ENCODE measurements at regions of chr17 and their contacts with region 1.

Region 1: DNA sequence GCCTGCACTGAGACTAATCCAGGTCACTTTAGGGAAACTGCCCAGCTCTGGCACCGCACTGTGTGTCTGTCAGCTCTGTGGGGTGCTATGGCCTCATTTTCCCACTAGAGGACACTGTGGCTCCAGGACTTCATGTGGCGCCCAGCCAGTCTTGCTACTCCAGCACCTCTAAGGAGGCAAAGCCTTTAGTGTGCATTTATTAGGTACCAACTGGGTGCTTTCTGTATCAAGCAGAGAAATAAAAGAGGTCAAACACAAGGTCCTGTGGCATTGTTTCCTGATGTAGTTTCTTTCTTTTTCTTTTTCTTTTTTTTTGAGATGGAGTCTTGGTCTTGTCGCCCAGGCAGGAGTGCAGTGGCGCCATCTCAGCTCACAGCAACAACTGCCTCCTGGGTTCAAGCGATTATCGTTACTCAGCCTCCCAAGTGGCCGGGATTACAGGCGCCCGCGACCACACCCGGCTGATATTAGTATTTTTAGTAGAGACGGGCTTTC is 12.5 kb upstream of the RHBDL3 start:
- DNase-seq: peak; percentile 83
- H3K4me3 ChIP-seq: no peak overlapping the region
- H3K27ac ChIP-seq: no peak overlapping the region
- H3K4me1 ChIP-seq: peaks cover 0 to 5% (median 0%) of the 10 kb centered on the region in 6 donors
- H3K27me3 ChIP-seq: no peaks in the 10 kb centered on the region
- CTCF ChIP-seq: peak; percentile 73 to 90 (median 88)
- POLR2A ChIP-seq: no peak

Region 2: GRCh38 chr17:32319548-32319905 is 66.4 kb after region 1 on chr17:
- intact Hi-C with region 1: loop called (anchors 10 kb)
- DNase-seq: peak; percentile 91
- H3K4me3 ChIP-seq: peak overlapping the region in 7 of 8 donors; percentile 11 to 62 (median 30)
- H3K27ac ChIP-seq: no peak overlapping the region
- H3K4me1 ChIP-seq: peaks cover 0 to 31% (median 20%) of the 10 kb centered on the region in 6 donors
- H3K27me3 ChIP-seq: no peaks in the 10 kb centered on the region
- CTCF ChIP-seq: peak; percentile 89 to 97 (median 96)
- POLR2A ChIP-seq: no peak